ENCODE measurements at regions of chr17 and their contacts with region 1.

Region 1: GRCh38 chr17:8965394-8966168 is at the start of gene PIK3R5:
- DNase-seq: peak; percentile 90
- H3K4me3 Mint-ChIP-seq: peak within 1 kb of the TSS; percentile 88
- H3K27ac Mint-ChIP-seq: peak within 1 kb of the TSS; percentile 80
- H3K4me1 Mint-ChIP-seq: peaks cover 48% of the 10 kb centered on the region
- H3K27me3 Mint-ChIP-seq: no peaks in the 10 kb centered on the region
- total RNA-seq, gene PIK3R5: 20.7 to 22.4 TPM

Region 2: GRCh38 chr17:9239793-9240658 is 274.4 kb after region 1 on chr17:
- CTCF ChIA-PET with region 1: no interaction called
- POLR2A ChIA-PET with region 1: no interaction called
- intact Hi-C with region 1: loop called (anchors 5 kb)
- DNase-seq: peak; percentile 74
- H3K4me3 Mint-ChIP-seq: peak overlapping the region; percentile 74
- H3K27ac Mint-ChIP-seq: no peak overlapping the region
- H3K4me1 Mint-ChIP-seq: peaks cover 20% of the 10 kb centered on the region
- H3K27me3 Mint-ChIP-seq: peaks cover 1% of the 10 kb centered on the region